ENCODE measurements at regions of chr21 and their contacts with region 1.

Region 1: DNA sequence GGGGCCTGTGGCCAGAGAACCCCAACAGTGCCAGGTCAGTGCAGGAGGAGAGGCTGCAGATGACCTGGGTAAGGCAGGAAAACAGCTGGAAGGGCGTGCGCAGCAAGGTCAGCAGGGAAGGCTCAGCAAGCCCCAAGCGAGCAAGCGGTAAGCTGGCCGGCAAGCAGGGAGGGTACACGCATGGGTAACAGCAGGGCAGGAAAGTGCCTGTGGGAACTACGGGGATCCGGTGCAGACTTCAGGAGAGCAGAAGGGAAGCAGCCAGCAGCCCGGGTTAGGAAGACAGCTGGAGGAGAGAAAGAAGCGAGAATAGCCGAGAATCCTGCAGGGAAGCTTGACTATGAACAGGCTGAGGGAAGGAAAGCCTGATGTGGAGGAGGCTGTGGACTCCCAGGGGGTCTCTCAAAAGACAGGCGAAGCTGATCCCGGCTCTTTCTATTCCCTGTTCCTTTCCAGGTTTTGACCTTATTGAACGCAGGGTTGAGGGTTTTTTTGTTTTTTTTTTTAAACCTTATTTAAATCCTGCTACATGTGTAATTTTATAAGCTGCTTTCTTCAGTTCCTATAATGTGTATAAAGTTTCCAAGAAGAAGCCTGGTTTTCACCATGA is 20.9 kb downstream of the UMODL1 start:
- DNase-seq: peak; percentile 40 to 60
- ATAC-seq: no peak
- H3K4me3 ChIP-seq: no peak overlapping the region
- H3K27ac ChIP-seq: no peak overlapping the region
- H3K4me1 ChIP-seq: peaks cover 5% of the 10 kb centered on the region in 2 donors
- H3K27me3 ChIP-seq: no peaks in the 10 kb centered on the region

Region 2: DNA sequence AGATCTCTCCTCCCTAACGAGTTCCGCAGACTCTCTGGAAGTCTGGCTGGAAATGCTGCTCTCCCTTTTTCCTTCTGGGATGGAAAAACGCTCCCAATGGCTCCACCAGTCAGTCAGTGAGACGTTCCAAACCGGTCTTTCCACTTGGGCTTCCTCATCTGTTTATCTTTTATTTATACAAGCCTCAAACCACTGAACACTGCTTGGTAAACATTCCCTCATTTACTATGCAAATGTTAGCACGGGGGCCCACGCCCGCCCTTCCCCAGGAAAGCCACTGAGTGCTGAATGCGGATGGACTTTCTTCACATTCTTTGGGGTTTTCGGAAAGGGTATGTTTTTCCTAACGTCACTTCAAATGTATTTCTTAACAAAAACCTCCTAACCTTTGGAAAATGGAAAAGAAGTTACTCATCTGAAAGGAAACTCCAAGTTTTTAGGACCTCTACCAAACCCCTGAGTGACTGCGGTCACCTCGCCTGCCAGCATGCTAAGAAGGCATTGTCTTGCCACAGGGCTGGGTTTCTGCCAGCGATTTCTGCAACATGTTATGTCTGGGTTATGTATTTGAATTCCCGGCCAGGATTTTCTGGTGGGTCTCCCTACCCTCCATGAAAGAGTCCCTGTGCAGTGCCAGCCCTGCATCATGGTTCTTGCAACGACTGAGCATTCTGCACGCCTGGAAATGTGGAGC is 34.9 kb before region 1 on chr21:
- intact Hi-C with region 1: loop called (anchors 2 kb)
- DNase-seq: peak; percentile 89
- ATAC-seq: peak; percentile 19
- H3K4me3 ChIP-seq: no peak overlapping the region
- H3K27ac ChIP-seq: peak overlapping the region; percentile 77 to 86
- H3K4me1 ChIP-seq: no peaks in the 10 kb centered on the region
- H3K27me3 ChIP-seq: no peaks in the 10 kb centered on the region

Region 3: DNA sequence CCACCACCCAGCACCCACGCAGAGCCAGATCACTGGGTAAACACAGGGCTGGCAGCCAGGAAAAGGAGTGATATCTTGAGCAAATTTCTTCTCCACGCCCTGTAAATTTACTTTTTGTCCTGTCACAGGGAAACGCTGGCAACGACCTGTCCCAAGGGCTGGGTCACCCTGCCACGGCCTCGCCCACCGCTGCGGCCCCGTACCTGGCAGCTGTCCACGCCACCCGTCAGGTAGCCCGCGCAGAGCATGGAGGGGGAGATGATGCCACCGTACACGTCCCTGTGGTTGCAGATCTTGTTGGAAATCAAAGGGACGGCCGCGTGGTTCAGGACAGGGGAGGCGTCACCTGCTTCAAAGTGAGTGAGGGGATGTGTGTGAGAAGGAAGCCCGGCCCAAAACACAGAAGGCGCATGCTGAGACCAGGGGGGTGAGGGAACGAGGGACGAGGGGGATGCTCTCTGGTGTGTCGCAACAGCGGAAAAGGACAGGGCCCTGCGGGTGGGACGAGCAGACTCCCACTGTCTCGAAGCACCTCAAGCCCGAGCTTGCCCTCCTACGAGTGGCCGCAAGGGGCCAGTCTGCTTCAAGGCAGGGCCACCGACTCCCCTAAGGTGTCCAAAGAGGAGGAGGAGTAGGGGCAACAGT is 284.5 kb after region 1 on chr21:
- intact Hi-C with region 1: no loop called
- DNase-seq: peak in 1 of 2 donors; percentile 69
- ATAC-seq: no peak
- H3K4me3 ChIP-seq: no peak overlapping the region
- H3K27ac ChIP-seq: no peak overlapping the region
- H3K4me1 ChIP-seq: no peaks in the 10 kb centered on the region
- H3K27me3 ChIP-seq: no peaks in the 10 kb centered on the region

Region 4: DNA sequence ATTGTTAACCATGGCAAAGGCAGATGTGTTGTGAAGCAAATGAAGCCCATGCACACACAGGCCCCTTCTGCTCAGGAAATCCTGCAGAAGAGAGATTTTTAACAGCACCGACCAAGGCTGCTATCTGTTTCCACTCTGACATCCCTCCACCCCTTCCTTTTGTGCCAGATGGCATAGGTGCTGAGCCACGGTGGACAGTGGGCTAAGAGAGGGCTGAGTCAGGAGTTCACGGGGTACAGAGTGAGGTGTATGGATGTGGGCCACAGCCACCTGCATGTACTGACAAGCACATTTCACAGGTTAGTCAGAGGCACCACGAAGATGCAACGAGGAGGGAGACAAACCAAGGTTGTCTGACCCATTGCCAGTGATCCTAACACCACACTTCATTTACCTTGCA is 394.5 kb after region 1 on chr21:
- intact Hi-C with region 1: no loop called
- DNase-seq: no peak
- ATAC-seq: no peak
- H3K4me3 ChIP-seq: no peak overlapping the region
- H3K27ac ChIP-seq: no peak overlapping the region
- H3K4me1 ChIP-seq: no peaks in the 10 kb centered on the region
- H3K27me3 ChIP-seq: no peaks in the 10 kb centered on the region